ENCODE measurements at regions of chr10 and their contacts with region 1.

Region 1: DNA sequence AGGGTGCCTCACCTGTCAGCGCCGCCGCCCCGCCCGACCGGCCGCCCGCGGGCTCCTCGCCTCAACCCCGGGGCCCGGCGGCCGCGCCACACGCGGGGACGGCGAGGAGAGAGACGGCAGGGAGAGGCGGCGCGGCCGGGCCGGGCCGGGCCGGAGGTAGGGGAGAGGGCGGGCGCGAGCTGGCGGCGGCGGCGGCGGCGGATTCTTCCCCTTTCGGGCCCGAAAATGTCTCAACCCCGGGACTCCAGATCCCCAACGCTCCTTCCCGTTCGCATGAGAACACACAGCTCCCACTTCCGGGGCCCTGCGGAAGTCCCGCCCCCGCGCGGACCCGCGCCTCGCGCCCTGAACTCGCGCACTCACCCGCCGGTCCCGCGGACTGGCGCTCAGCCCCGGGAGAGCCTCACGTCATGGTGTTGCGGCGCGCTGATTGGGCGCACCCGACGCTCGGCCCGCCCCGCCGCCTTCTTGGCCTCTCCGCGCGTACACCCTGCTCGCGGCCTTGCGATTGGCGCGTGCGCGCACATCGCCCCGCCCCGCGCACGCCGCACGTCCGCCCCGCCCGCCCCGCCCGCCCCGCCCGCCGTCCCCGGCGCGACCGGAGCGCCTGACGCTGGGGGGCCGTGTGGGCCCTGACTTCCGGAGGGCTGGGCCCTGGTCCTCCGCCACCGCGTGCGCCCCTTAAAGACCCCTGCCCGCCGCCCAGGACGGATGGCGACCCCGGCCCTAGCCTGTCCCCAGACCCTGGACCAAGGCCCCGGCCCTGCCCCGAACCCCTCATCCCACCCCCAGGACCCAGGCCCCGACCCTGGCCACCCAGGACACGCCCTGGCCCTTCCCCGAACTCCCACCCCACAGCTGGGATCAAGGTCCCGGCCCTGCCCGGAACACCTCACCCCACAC is at the start of gene LARP4B:
- DNase-seq: peak; percentile 98
- H3K4me3 ChIP-seq: peak within 1 kb of the TSS; percentile 78
- H3K27ac ChIP-seq: peak within 1 kb of the TSS; percentile 75
- H3K4me1 ChIP-seq: peaks cover 47% of the 10 kb centered on the region
- CTCF ChIP-seq: no peak
- total RNA-seq, gene LARP4B: 64.8 and 68.3 TPM in 2 replicates

Region 2: GRCh38 chr10:734481-734880 is 197.2 kb before region 1 on chr10:
- CTCF ChIA-PET with region 1: no interaction called
- POLR2A ChIA-PET with region 1: no interaction called
- intact Hi-C with region 1: no loop called
- DNase-seq: no peak
- H3K4me3 ChIP-seq: no peak overlapping the region
- H3K27ac ChIP-seq: no peak overlapping the region
- H3K4me1 ChIP-seq: no peaks in the 10 kb centered on the region
- CTCF ChIP-seq: no peak

Region 3: DNA sequence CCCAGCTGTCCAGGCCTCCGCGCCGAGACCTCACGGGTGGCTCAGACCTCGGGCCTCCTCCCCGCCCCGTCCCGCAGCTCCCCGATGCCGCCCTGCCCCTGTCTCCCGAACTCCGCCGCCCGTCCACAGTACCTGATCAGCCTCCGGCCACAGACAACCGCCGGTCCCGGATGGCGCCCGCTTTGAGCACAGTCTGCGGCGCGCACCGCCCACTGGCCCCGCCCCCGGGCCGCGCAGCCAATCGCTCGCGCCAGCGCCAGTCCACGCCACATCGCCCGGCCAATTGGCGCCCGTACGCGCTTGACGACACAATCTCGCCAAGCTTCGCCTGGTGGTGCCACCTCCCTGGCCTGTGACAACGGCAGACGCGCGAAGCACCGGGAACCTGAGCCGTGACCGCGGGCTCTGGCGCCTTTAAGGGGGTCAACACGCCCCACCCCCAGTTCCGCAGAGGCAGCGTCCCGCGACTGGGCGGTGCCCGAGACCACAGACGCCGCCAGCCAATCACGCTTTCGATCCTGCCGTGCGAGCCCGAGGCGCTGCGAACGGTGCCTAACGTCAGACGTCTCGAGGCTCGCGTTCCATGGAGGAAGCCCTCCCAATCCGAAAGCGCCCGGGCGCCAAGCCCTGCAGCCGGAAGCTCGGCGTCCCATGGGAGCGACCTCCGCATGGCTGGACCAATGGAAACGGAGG is 117.2 kb after region 1 on chr10 and contains the start of gene IDI1:
- CTCF ChIA-PET with region 1: no interaction called
- POLR2A ChIA-PET with region 1: no interaction called
- intact Hi-C with region 1: loop called (anchors 2 kb)
- DNase-seq: peak; percentile 99
- H3K4me3 ChIP-seq: peak within 1 kb of the TSS; percentile 74
- H3K27ac ChIP-seq: peak within 1 kb of the TSS; percentile 83
- H3K4me1 ChIP-seq: peaks cover 48% of the 10 kb centered on the region
- CTCF ChIP-seq: no peak
- total RNA-seq, gene IDI1: 98.2 and 112 TPM in 2 replicates

Measured in OCI-LY7 (cell line).